Adrenal gland (tissue), 19 donors: ENCODE measurements at regions of chr5 and their contacts with region 1.

Region 1: DNA sequence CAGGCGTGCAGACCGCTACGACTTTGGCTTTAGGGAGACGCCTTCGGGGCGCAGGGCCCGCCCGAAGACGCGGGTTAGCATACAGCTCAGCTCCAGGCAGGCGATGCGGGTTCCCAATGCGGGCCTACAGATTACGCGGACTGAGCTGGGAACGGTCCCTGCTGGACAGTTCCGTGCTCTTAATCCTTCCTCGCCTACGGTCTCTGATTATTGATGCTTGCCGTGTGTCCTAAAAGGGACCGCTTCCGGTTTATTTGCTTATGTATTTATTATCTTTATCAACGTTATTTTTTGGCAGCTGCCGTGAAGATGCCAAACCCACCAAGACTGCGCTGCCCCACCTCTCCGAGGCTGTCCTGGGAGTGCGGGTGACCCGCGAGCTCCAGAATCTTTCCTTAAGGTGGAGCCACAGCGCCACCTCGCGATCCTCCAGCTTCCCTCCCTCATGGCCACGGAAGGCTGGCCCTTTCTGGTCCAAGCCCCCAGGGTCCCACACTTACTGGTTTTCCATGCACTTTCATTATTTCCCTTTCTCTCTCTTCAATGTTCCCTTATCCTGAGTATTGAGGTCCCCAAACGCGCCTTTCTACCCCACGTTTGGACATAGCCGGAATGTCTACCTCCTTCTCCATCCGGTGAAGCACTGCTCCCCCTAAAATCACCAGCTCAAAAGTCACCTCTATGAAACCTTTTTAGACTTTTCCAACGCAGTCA is 7.0 kb upstream of the EBF1 start:
- DNase-seq: peak; percentile 61 to 87 (median 72)
- H3K4me3 ChIP-seq: peak overlapping the region in 1 of 4 donors; percentile 20
- H3K27ac ChIP-seq: no peak overlapping the region
- H3K4me1 ChIP-seq: no peaks in the 10 kb centered on the region
- H3K27me3 ChIP-seq: peaks cover 20% of the 10 kb centered on the region
- CTCF ChIP-seq: peak; percentile 75 to 96 (median 92)
- POLR2A ChIP-seq: no peak

Region 2: DNA sequence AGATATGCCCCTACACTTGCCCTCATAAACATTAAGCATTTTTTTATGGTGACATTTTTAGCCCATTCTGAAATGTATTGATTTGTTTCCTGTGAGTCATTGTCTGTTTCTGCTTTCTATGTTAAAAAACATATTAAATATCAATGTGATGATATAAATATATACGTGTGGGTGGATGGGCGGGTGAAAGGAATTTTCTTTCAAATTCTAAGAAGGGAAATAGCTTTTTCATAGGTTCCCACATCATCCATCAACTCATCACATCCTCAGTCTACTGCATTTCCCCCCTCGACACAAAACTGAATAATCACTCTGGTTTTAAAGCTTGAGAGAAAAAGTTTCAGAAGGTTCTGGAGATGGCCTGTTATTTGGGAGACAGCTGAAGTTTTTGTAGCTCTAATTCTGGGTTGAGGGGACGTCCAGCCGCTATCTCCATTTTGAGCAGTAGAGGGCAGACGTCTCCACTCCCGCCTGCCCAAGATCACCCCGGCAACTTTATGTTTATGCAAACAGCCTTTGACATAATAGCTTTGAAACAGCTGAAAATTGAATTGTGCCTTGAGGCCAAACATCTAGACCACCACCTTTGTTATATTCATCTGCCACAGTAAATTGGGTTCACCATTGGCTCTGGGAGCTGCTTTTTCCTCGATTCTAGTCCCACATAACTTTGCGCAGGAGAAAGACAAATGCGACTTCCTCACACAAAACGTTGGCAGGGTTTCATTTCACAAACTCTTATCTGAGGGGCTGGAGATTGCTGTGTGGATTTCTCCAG is 1031.5 kb before region 1 on chr5:
- intact Hi-C with region 1: loop called in 1 of 2 experiments (anchors 10 kb)
- DNase-seq: peak; percentile 38 to 85 (median 64)
- H3K4me3 ChIP-seq: peak overlapping the region in 1 of 4 donors; percentile 26
- H3K27ac ChIP-seq: peak overlapping the region in 2 of 5 donors; percentile 27 to 45
- H3K4me1 ChIP-seq: peaks cover 0 to 5% of the 10 kb centered on the region in 2 donors
- H3K27me3 ChIP-seq: no peaks in the 10 kb centered on the region
- CTCF ChIP-seq: peak; percentile 65 to 85 (median 72)
- POLR2A ChIP-seq: no peak

Region 3: GRCh38 chr5:158695595-158696330 is 411.0 kb before region 1 on chr5:
- intact Hi-C with region 1: loop called (anchors 2 to 5 kb)
- DNase-seq: peak; percentile 44 to 86 (median 69)
- H3K4me3 ChIP-seq: no peak overlapping the region
- H3K27ac ChIP-seq: peak overlapping the region in 1 of 5 donors; percentile 1
- H3K4me1 ChIP-seq: peaks cover 0 to 5% of the 10 kb centered on the region in 2 donors
- H3K27me3 ChIP-seq: no peaks in the 10 kb centered on the region
- CTCF ChIP-seq: peak; percentile 88 to 97 (median 95)
- POLR2A ChIP-seq: no peak